ENCODE measurements at regions of chr4 and their contacts with region 1.

Region 1: DNA sequence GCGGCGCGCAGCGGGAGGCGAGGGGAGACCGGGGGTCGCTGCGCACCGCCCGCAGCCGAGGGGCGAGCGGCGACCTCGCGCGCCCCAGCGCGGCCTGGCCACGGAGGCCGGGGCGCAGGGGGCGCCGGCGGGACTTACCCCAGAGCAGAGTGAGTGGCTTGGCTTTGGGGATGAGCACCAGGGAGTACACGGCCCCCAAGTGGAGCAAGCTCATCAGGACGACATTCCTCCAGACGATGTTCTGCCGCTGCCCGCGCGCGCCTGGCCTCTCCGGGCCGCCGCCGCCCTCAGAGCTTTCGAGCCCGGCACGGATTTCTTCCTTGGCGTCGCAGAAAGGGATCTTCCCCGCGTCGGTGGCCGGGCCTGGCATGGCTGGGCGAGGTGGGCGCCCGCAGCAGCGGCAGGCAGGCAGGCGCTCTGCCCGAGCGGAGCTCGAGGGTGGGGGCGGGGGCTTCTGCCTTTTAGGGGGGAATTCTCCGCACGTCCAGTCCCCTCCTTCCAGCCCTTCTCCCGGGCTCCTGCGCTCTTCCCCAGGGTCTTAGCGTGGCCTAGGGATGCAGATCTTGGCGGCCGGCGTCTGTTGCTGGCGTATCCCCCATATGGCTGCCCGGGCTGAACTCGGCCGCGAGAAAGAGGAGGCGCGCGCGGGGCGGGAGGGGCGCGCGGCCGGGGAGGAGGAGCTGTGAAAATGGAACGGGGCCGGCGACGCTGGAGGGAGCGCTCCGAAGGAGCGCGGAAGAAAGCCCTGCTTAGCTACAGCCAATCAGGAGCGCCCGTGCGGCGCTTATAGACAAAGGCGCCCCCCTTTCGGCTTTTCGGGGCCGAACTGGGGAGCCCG is at the start of gene SCD5:
- DNase-seq: peak; percentile 86
- H3K4me3 ChIP-seq: peak within 1 kb of the TSS; percentile 80 to 82
- H3K27ac ChIP-seq: peak within 1 kb of the TSS in 1 of 2 experiments; percentile 57; a peak in 2 of 4 replicates
- H3K4me1 ChIP-seq: peaks cover 11 to 13% of the 10 kb centered on the region in 2 experiments; a peak in 1 of 4 replicates
- H3K27me3 ChIP-seq: no peaks in the 10 kb centered on the region
- CTCF ChIP-seq: no peak
- EP300 ChIP-seq: no peak
- RAD21 ChIP-seq: no peak
- polyA plus RNA-seq, gene SCD5: 23.7 and 28.0 TPM in 2 replicates

Region 2: GRCh38 chr4:82462415-82462831 is 336.0 kb before region 1 on chr4:
- CTCF ChIA-PET with region 1: interaction called, 10 read pairs
- POLR2A ChIA-PET with region 1: no interaction called
- DNase-seq: peak; percentile 89
- H3K4me3 ChIP-seq: no peak overlapping the region
- H3K27ac ChIP-seq: no peak overlapping the region
- H3K4me1 ChIP-seq: no peaks in the 10 kb centered on the region; a peak in 1 of 4 replicates
- H3K27me3 ChIP-seq: no peaks in the 10 kb centered on the region
- CTCF ChIP-seq: peak; percentile 67
- EP300 ChIP-seq: no peak
- RAD21 ChIP-seq: peak; percentile 80

Region 3: DNA sequence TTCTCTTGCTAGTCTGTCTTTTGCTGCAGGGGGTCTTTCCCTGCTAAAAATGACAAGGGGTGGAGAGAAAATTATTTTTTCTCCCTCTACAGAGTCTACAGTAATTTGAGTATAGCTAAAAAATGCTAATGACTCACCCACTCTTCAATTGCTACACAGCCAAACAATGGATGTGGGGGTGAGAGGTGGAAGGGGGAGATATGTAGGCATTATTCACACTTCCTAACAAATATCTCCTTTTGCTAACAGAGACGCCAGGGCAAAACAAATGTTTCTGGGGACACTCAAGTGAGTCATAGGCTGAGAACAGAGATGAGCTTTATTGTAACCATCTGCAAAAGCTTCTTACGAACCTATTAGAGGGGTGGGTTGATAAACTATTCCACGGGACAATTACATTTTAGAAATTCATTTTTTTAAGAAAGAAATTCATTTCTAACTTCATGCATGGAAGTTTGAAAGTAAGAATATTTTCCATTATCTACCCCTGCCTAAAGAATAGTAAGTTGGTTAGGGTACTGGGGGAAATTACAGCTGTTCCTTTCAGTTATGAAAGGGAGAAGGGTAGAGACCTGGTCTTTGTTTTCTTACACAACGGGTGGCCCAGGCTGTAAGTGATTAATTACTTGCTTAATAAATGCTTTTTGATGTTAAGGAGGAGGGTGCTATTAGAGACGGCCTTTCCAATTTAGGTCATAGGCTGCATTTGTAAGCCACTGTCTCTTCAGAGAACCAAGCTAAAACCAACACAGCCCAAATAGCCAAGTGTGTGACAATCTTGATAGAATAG is 12.6 kb before region 1 on chr4:
- CTCF ChIA-PET with region 1: interaction called, 9 read pairs
- POLR2A ChIA-PET with region 1: interaction called, 15 read pairs
- DNase-seq: no peak
- H3K4me3 ChIP-seq: peak overlapping the region; percentile 38 to 48; a peak in 3 of 4 replicates
- H3K27ac ChIP-seq: peak overlapping the region; percentile 85 to 97
- H3K4me1 ChIP-seq: peaks cover 22 to 28% of the 10 kb centered on the region in 2 experiments
- H3K27me3 ChIP-seq: no peaks in the 10 kb centered on the region
- CTCF ChIP-seq: no peak
- EP300 ChIP-seq: peak in 1 of 2 experiments; percentile 83; a peak in 2 of 4 replicates
- RAD21 ChIP-seq: no peak

Region 4: DNA sequence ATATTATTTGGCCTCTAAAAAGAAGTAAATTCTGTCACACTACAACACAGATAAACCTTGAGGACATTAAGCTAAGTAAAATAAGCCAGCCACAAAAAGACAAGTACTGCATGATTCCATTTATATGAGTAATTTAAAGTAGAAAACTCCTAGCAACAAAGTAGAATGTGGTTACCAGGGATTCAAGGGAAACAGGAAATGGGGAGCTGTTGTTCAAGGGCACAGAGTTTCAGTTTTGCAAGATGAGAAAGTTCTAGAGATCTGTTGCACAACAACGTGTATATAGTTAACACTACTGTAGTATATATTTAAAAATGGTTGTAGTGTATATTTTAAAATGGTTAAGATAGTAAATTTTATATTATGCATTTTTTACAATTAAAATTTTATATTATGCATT is 67.2 kb after region 1 on chr4:
- CTCF ChIA-PET with region 1: no interaction called
- POLR2A ChIA-PET with region 1: no interaction called
- DNase-seq: no peak
- H3K4me3 ChIP-seq: no peak overlapping the region
- H3K27ac ChIP-seq: peak overlapping the region in 1 of 2 experiments; percentile 92; a peak in 2 of 4 replicates
- H3K4me1 ChIP-seq: peaks cover 0 to 8% of the 10 kb centered on the region in 2 experiments; a peak in 1 of 4 replicates
- H3K27me3 ChIP-seq: no peaks in the 10 kb centered on the region
- CTCF ChIP-seq: no peak
- EP300 ChIP-seq: no peak
- RAD21 ChIP-seq: no peak

Measured in SK-N-SH (cell line).